Aorta (tissue), 5 donors: ENCODE measurements at regions of chr5 and their contacts with region 1.

Region 1: DNA sequence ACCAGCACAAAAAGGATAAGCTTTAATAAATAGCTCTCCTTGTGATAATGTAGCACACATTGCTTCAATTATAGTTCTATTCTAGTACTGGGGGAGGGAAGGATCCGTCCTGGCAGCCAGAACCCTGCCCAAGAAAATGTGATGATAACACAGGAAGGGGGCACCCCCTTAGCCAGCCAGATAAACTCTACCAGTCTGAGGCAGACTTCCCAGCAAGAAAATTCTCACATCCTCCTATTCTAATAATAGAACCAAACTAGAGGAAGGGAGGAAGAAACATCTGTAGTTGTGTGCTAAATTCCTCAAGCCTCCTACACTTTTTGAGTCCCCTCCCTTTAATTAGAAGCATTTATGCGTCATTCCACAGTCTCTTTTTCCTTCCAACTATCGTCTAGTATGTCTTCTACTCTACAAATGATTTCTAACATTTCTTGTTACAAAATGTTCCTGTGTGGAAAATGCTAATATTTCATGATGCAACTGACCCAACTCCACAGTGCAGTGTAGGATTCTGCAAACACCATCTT is 261.0 kb downstream of the SEMA5A start:
- DNase-seq: peak in 1 of 2 donors; percentile 64
- ATAC-seq: peak; percentile 74
- H3K4me3 ChIP-seq: no peak overlapping the region
- H3K27ac ChIP-seq: peak overlapping the region; percentile 67 to 89
- H3K4me1 ChIP-seq: peaks cover 0 to 3% of the 10 kb centered on the region in 2 donors
- H3K27me3 ChIP-seq: no peaks in the 10 kb centered on the region

Region 2: GRCh38 chr5:8660133-8660893 is 624.5 kb before region 1 on chr5:
- intact Hi-C with region 1: no loop called
- DNase-seq: no peak
- ATAC-seq: no peak
- H3K4me3 ChIP-seq: no peak overlapping the region
- H3K27ac ChIP-seq: no peak overlapping the region
- H3K4me1 ChIP-seq: no peaks in the 10 kb centered on the region
- H3K27me3 ChIP-seq: no peaks in the 10 kb centered on the region

Region 3: DNA sequence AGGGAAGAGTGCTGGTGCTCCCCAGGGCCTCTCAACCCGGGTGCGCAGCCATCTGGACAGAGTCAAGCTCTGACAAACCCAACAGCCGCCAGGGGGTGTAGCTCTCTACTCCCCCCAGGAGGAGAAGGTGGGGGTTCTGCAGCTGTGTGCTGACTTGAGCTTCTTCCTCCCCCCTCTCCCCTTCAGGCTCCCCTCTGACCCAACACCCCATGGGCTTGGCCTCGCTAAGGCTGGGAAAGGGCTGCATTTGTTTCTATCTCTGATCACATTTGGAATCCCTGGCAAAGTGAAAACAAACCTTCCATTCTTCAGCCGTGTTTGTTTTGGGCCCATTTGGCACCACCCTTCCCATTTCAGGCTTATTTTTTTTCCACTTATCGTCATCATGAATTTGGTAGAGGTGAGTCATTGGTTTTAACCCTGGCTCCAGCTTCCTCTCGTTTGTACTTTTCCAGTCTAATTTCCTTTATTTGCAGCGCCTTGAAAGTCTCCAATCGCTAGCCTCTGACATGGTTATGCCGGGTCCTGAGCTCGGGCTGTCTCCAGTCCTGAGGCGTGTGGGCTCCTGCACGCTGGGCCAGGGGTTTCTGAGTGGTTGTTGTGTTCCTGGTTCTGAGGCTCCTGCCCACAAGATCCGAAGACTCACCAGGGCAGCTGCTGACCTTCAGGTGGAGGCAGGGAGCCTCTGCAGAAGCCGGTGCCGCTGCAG is 1440.1 kb after region 1 on chr5:
- intact Hi-C with region 1: loop called in 1 of 2 experiments (anchors 10 kb)
- DNase-seq: peak; percentile 73 to 80
- ATAC-seq: peak; percentile 82
- H3K4me3 ChIP-seq: no peak overlapping the region
- H3K27ac ChIP-seq: peak overlapping the region; percentile 85 to 86
- H3K4me1 ChIP-seq: no peaks in the 10 kb centered on the region
- H3K27me3 ChIP-seq: no peaks in the 10 kb centered on the region